A673 (cell line): ENCODE measurements at regions of chr11 and their contacts with region 1.

Region 1: GRCh38 chr11:102914238-102915043 is 39.7 kb upstream of the MMP12 start:
- DNase-seq: peak; percentile 89
- H3K4me3 ChIP-seq: no peak overlapping the region
- H3K27ac ChIP-seq: peak overlapping the region; percentile 63
- H3K4me1 ChIP-seq: peaks cover 33% of the 10 kb centered on the region
- H3K27me3 ChIP-seq: no peaks in the 10 kb centered on the region
- CTCF ChIP-seq: peak; percentile 90

Region 2: DNA sequence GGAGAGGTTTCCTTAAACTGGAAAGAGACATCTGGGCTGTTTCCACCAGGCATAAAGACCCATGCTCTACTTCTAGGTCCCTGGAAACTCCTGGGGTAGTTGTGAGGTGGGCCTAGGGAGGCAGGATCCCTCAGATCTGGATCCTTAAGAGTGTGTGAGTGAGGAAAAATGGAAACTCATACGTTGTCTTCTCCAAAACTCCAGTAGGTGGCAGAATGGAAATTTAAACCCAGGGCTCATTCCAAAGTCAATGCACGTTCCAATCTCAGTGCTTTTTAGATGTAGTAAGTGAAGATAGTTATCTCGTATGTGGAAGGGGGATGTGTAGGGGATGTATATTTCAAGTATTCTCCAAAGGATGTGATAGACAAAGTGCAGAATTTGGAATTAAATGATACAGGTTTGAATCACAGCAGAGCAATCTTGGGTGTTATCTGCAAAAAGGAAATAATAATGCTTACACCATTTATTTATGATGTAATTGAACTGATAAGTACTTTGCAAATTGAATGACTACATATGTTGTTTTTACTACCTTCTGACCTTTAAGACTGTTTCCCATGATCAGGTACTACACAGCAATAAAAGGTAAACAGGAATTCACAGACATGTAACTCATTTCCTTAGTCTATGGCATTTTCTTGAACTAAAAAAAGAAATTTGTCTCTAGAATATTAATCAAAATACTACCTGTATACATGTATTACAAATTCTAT is 103.3 kb before region 1 on chr11:
- CTCF ChIA-PET with region 1: interaction called, 8 read pairs
- POLR2A ChIA-PET with region 1: no interaction called
- intact Hi-C with region 1: loop called (anchors 5 kb)
- DNase-seq: peak; percentile 92
- H3K4me3 ChIP-seq: no peak overlapping the region
- H3K27ac ChIP-seq: peak overlapping the region; percentile 61
- H3K4me1 ChIP-seq: peaks cover 28% of the 10 kb centered on the region
- H3K27me3 ChIP-seq: no peaks in the 10 kb centered on the region
- CTCF ChIP-seq: peak; percentile 83

Region 3: DNA sequence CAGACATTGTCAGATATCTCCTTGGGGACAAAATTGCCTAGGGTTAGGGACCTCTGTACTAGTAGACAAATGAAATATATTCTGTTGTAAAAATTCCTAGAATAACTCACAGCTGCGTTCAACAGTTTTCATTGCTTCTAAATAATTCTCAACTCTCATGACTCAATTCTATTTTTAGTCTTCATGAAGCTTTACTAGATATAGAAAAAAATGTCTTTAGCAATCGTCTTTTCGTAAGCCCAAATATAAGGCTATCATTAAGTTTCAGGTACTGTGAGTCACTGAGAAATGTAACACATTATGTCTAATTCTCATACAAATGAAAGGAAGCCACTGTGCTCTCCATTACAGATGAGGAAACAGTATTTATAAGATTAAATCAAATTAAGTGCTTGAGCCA is 46.1 kb before region 1 on chr11:
- CTCF ChIA-PET with region 1: no interaction called
- POLR2A ChIA-PET with region 1: interaction called, 17 read pairs
- intact Hi-C with region 1: no loop called
- DNase-seq: peak; percentile 65
- H3K4me3 ChIP-seq: no peak overlapping the region
- H3K27ac ChIP-seq: peak overlapping the region; percentile 23
- H3K4me1 ChIP-seq: peaks cover 16% of the 10 kb centered on the region
- H3K27me3 ChIP-seq: no peaks in the 10 kb centered on the region
- CTCF ChIP-seq: no peak

Region 4: DNA sequence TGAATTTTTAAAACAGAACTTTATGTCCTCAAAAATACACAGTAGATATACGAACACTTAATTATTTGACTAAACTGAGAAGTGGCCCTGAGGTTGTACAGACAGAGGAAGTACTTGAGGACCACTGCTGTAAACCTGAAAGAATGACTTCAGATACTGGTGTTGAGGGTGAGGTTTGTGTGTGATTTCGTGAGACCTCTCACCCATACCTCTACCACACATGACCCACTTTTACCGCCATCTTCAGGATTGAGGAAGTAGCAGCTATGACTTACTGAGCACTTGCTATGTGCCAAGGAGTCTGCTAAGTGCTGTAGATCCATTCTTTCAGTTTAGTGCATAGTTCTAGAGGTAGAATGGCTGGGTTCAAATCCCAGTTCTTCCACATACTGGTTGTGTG is 19.2 kb after region 1 on chr11:
- CTCF ChIA-PET with region 1: interaction called, 14 read pairs
- POLR2A ChIA-PET with region 1: interaction called, 3 read pairs
- intact Hi-C with region 1: no loop called
- DNase-seq: no peak
- H3K4me3 ChIP-seq: no peak overlapping the region
- H3K27ac ChIP-seq: peak overlapping the region; percentile 93
- H3K4me1 ChIP-seq: peaks cover 55% of the 10 kb centered on the region
- H3K27me3 ChIP-seq: no peaks in the 10 kb centered on the region
- CTCF ChIP-seq: no peak

Region 5: DNA sequence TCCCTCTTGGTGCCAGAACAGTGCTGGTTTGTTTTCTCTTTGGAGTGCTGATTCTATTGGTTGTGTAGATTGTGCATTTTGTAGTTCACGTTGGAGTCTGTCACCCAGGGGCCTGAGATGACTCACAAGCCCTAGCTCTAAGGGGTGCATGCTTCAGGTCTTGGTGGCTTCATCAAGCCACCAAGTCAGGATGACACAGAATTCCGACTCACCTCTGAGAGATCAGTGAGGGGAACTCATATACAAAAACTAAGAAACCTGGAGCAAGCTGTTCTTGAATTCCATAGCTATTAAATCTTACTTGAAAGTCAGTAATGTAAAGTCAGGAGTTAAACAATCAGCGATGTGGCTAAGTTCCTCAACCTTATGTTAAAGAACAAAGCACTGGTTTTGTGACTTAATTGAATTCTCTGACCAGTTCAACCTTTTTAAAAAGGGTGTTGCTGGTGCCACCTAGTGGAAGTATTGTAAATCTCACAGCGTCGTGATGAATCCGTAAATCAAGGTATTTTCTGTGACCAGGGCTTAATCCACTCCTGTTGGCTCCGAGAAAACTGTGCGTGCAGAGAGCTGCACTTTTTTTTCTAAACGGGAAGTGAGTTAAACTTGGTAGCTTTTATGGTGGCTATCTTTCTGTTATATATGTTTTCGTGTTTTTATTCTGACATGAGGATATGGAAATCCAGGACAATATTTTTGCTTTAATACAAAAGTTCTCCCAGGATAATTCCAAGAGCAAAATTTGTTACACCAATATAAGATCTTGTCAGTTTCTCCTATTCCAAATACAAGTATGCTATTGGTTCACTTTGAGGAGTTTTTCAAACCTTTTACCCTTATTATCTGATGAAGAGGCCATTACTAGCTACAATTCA is 26.5 kb after region 1 on chr11:
- CTCF ChIA-PET with region 1: interaction called, 12 read pairs
- POLR2A ChIA-PET with region 1: no interaction called
- intact Hi-C with region 1: loop called (anchors 1 kb)
- DNase-seq: peak; percentile 93
- H3K4me3 ChIP-seq: no peak overlapping the region
- H3K27ac ChIP-seq: peak overlapping the region; percentile 11
- H3K4me1 ChIP-seq: peaks cover 21% of the 10 kb centered on the region
- H3K27me3 ChIP-seq: no peaks in the 10 kb centered on the region
- CTCF ChIP-seq: peak; percentile 94

Region 6: GRCh38 chr11:102974552-102975291 is 60.3 kb after region 1 on chr11:
- CTCF ChIA-PET with region 1: no interaction called
- POLR2A ChIA-PET with region 1: no interaction called
- intact Hi-C with region 1: no loop called
- DNase-seq: no peak
- H3K4me3 ChIP-seq: no peak overlapping the region
- H3K27ac ChIP-seq: no peak overlapping the region
- H3K4me1 ChIP-seq: no peaks in the 10 kb centered on the region
- H3K27me3 ChIP-seq: no peaks in the 10 kb centered on the region
- CTCF ChIP-seq: no peak

Region 7: DNA sequence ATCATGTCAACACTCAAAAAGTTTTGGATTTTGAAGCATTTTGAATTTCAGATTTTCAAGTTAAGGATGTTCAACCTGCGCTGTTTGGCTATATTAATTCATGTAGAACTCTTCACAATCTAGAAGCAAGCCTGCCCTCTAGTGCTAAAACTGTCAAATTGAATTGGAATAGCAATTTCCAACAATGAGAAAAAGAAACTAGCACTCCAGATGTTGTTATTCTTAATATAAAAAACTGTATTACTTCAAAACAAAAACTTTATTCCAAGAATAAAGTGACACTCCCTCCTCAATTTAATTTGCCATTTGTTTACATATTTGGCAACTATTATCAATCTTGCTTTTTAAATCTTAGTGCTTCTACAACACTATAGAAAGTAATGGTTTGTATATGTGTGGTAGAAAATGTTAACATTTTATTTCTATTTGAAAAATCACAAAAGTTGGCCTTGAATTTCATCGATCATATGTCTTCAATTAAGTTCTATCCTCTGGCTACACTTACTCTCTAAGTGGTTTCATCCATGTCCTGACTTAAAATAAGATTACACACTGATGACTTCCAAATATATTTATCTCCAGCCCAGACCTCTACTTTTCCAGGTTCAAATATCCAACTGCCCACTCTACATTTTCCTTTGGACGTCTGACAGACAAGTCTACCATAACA is 140.9 kb after region 1 on chr11:
- CTCF ChIA-PET with region 1: interaction called, 3 read pairs
- POLR2A ChIA-PET with region 1: no interaction called
- intact Hi-C with region 1: loop called (anchors 1 kb)
- DNase-seq: peak; percentile 86
- H3K4me3 ChIP-seq: no peak overlapping the region
- H3K27ac ChIP-seq: peak overlapping the region; percentile 28
- H3K4me1 ChIP-seq: peaks cover 24% of the 10 kb centered on the region
- H3K27me3 ChIP-seq: no peaks in the 10 kb centered on the region
- CTCF ChIP-seq: peak; percentile 88